Activated T-helper 2 cell treated with anti-CD3 and anti-CD28 coated beads, Interferon-gamma antibody, Interleukin-2, Interleukin-4, amounts not matched to agents 10 μg/mL and 5 μg/mL and 100 μg/mL, durations not matched to agents 14 hours and 24 hours and 36 hours (primary cell): ENCODE measurements at regions of chr3 and their contacts with region 1.

Region 1: DNA sequence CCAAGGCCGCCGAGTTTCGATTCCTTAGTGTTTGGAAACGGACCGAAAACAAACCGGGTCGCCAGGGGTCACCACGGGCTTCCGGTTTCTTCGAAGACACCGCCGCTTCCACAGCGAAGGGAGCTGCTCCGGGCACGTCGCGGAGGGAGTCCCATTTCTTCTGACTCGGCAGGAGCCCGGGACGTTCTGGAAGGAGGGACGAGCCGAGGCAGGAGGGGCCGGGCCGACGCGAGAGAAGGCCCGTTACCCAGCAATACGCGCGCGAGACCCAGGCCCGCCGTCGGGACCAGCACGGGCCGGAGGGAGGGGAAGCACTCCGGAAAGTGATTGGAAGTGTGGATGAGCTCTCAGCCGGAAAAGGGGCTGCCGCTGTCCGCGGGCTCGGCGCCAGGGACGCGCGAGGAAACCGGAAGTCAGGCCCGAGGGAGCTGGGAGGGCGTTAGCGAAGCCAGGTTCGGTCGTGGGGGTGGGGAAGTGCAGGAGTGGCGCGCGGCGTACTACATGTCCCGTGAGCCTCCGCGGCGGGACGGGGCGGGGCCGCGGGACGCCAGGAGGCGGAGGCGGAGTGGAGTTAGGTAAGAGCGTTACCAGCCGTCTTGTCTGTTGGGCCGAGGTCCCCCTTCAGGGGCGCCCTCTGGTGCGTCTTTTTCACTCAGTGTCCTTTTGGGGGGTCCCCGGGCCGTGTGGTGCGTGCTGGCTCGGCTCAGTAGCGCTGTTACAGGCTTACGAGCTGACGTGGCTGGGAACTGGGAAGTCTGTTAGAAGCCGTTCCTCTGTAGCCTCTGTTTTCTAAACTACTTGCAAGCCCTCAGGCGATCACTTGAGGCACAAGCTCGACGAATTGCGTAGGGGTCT is at the starts of genes AZI2 and ZCWPW2:
- DNase-seq: peak; percentile 89
- H3K4me3 Mint-ChIP-seq: peak within 1 kb of the TSS; percentile 94
- H3K27ac Mint-ChIP-seq: peak within 1 kb of the TSS; percentile 98
- H3K4me1 Mint-ChIP-seq: peaks cover 48% of the 10 kb centered on the region
- H3K27me3 Mint-ChIP-seq: no peaks in the 10 kb centered on the region
- total RNA-seq, gene AZI2: 35.6 and 37.5 TPM in 2 replicates
- total RNA-seq, gene ZCWPW2: 0.14 and 0.16 TPM in 2 replicates

Region 2: DNA sequence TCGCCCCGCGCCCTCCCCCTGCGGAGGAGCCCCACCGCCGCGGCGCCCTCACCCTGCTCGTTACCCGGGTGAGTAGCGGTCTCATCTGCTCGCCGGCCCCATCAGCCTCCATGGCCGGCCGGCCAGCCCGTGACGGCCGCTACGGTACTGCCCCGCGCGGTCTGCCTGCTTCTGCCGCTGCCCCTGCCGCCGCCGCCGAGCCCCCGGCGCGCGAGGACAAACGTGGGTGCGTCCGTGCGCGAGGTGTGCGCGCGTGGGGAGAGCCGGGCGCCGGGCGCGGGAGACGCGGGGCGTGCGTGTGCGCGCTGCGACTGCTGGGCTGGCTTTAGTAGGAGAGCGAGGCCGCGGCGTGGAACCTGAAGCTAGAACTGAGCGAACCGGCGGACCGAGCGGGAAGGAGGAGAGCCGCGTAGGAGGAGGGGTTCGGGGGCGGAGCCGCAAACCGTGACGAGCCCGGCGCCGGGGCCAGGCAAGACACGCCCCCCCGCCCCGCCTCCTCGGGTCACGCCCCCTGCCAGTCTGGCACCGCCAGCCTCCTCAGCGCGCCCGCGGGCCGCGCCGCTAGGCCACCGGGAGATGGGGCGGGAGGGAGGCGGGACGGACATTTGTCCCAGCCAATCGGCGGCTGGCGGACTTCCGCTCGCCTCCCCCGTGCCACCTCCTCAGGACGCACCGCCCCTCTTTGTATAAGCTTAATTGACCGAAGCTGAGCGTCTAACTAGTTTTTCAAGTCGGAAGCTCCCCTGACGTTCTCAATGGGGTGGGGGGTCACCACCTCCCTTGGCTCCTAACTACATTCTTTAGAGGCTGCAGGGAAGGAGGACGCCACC is 864.6 kb before region 1 on chr3 and contains the start of gene SLC4A7:
- intact Hi-C with region 1: loop called (anchors 2 kb)
- DNase-seq: peak; percentile 97
- H3K4me3 Mint-ChIP-seq: peak within 1 kb of the TSS; percentile 93
- H3K27ac Mint-ChIP-seq: peak within 1 kb of the TSS; percentile 88
- H3K4me1 Mint-ChIP-seq: peaks cover 31% of the 10 kb centered on the region
- H3K27me3 Mint-ChIP-seq: no peaks in the 10 kb centered on the region
- total RNA-seq, gene SLC4A7: 76.4 and 77.8 TPM in 2 replicates

Region 3: GRCh38 chr3:27712136-27713077 is 636.4 kb before region 1 on chr3:
- intact Hi-C with region 1: loop called (anchors 5 kb)
- DNase-seq: peak; percentile 76
- H3K4me3 Mint-ChIP-seq: peak overlapping the region; percentile 93
- H3K27ac Mint-ChIP-seq: peak overlapping the region; percentile 85
- H3K4me1 Mint-ChIP-seq: peaks cover 38% of the 10 kb centered on the region
- H3K27me3 Mint-ChIP-seq: peaks cover 52% of the 10 kb centered on the region

Region 4: GRCh38 chr3:28241221-28242160 is 107.4 kb before region 1 on chr3 and contains the start of gene CMC1:
- intact Hi-C with region 1: loop called (anchors 1 kb)
- DNase-seq: peak; percentile 86
- H3K4me3 Mint-ChIP-seq: peak within 1 kb of the TSS; percentile 89
- H3K27ac Mint-ChIP-seq: peak within 1 kb of the TSS; percentile 93
- H3K4me1 Mint-ChIP-seq: peaks cover 38% of the 10 kb centered on the region
- H3K27me3 Mint-ChIP-seq: no peaks in the 10 kb centered on the region
- total RNA-seq, gene CMC1: 20.6 and 23.5 TPM in 2 replicates

Region 5: DNA sequence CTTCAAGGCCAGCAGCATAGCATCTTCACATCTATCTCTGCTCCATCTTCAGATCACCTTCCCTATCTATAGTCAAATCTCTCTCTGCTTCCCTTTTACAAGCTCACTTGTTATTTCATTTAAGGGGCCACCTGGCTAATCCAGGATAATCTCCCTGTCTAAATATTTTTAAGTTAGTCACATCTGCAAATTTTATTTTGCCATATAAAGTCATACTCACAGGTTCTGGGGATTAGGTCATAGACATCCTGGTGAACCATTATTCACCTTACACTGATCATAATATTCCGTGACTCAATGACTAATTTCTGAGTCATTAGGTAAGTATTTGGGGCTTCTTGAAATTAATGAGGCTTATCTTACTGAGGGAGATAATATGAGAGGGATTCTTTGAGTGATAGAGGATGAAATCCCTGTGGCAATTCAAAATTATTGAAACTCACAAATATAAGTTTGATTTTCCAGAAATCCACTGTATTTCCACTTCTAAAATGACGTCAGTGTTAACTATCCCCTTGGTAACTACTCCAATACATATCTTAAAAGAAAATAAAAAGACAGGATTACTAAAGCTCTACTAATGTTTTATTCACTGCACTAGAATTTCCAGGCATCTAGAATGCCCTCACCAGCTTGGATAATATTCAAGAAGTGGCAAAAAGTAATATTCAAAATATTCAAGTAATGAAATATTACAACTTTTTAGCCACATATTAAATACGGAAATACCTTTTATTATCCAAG is 838.3 kb after region 1 on chr3:
- intact Hi-C with region 1: loop called (anchors 10 kb)
- DNase-seq: no peak
- H3K4me3 Mint-ChIP-seq: no peak overlapping the region
- H3K27ac Mint-ChIP-seq: peak overlapping the region; percentile 39
- H3K4me1 Mint-ChIP-seq: peaks cover 30% of the 10 kb centered on the region
- H3K27me3 Mint-ChIP-seq: no peaks in the 10 kb centered on the region